AG04449 (cell line): ENCODE measurements at regions of chr1 and their contacts with region 1.

Region 1: DNA sequence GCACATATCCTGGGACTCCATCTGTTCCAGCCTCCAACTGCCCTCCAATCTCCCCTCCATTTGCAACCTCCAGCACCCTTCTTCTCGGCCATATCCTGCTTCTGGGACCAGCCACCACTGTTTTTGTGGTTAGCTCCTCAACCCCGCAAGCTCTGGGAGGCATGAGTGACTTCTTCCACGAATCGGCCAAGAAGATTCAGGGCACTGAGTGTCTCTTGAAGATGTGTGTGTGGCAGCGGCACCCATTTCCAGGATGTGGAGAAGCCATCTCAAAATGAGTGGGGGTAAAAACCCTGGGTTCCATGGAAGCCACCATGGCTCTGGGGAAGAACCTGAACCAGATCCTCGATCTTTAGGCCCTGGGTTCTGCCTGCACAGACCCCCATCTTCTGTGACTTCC is 194.6 kb downstream of the SLC45A1 start:
- DNase-seq: no peak
- H3K4me3 ChIP-seq: no peak overlapping the region
- CTCF ChIP-seq: no peak

Region 2: DNA sequence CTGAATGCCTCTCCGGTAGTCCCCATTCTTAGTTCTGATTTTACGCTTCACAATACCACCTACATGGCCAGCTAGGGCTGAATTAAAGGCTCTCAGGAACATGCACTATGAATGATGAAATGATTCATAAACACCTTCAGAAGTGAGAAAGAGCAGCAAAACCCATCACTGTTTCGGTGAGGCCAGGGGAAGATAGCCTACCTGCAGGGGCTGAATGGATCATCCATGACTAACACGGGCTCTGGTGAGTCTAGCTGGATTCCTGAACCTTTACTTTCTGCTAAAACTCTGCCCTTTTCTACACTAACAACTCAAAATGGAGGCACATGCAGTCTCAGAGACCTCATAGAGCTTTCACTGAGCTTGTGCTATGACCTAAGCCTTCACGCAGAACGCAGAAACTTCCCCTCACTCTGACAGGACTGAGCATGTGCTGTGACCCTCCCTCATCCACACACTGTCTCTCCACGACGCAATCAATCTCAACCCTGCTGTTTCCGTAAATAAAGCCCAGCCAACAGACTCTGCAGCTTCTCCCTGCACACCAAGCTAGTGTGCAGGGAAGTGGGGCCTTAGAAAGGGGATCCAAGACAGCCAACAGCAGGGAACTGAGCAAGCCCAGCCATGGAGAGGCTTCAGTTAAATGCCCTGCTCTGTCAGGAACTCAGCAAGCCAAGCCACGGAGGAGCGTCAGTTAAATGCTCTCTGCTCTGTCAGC is 13.2 kb after region 1 on chr1:
- CTCF ChIA-PET with region 1: interaction called, 11 read pairs
- POLR2A ChIA-PET with region 1: interaction called, 6 read pairs
- DNase-seq: peak; percentile 70
- H3K4me3 ChIP-seq: peak overlapping the region; percentile 69
- CTCF ChIP-seq: no peak